ENCODE measurements at regions of chr17 and their contacts with region 1.

Region 1: GRCh38 chr17:36601303-36602029 is at the start of gene MRM1:
- DNase-seq: peak; percentile 93
- ATAC-seq: peak; percentile 90
- H3K4me3 Mint-ChIP-seq: peak within 1 kb of the TSS; percentile 88
- H3K27ac Mint-ChIP-seq: peak within 1 kb of the TSS; percentile 88
- H3K4me1 Mint-ChIP-seq: peaks cover 44% of the 10 kb centered on the region
- H3K27me3 Mint-ChIP-seq: no peaks in the 10 kb centered on the region
- total RNA-seq, gene MRM1: 10.7 to 13.1 TPM

Region 2: GRCh38 chr17:36545465-36546417 is 55.7 kb before region 1 on chr17:
- CTCF ChIA-PET with region 1: interaction called, 12 read pairs
- POLR2A ChIA-PET with region 1: interaction called, 16 read pairs
- DNase-seq: peak; percentile 96
- ATAC-seq: peak; percentile 83
- H3K4me3 Mint-ChIP-seq: peak overlapping the region; percentile 87
- H3K27ac Mint-ChIP-seq: peak overlapping the region; percentile 95
- H3K4me1 Mint-ChIP-seq: peaks cover 43% of the 10 kb centered on the region
- H3K27me3 Mint-ChIP-seq: no peaks in the 10 kb centered on the region

Region 3: GRCh38 chr17:36623281-36623680 is 21.8 kb after region 1 on chr17:
- CTCF ChIA-PET with region 1: interaction called, 40 read pairs
- POLR2A ChIA-PET with region 1: interaction called, 4 read pairs
- DNase-seq: no peak
- ATAC-seq: no peak
- H3K4me3 Mint-ChIP-seq: no peak overlapping the region
- H3K27ac Mint-ChIP-seq: no peak overlapping the region
- H3K4me1 Mint-ChIP-seq: peaks cover 2% of the 10 kb centered on the region
- H3K27me3 Mint-ChIP-seq: no peaks in the 10 kb centered on the region

Region 4: GRCh38 chr17:36705874-36706731 is 104.6 kb after region 1 on chr17:
- CTCF ChIA-PET with region 1: interaction called, 14 read pairs
- POLR2A ChIA-PET with region 1: no interaction called
- DNase-seq: peak; percentile 70
- ATAC-seq: peak; percentile 88
- H3K4me3 Mint-ChIP-seq: no peak overlapping the region
- H3K27ac Mint-ChIP-seq: no peak overlapping the region
- H3K4me1 Mint-ChIP-seq: no peaks in the 10 kb centered on the region
- H3K27me3 Mint-ChIP-seq: peaks cover 19% of the 10 kb centered on the region

Region 5: DNA sequence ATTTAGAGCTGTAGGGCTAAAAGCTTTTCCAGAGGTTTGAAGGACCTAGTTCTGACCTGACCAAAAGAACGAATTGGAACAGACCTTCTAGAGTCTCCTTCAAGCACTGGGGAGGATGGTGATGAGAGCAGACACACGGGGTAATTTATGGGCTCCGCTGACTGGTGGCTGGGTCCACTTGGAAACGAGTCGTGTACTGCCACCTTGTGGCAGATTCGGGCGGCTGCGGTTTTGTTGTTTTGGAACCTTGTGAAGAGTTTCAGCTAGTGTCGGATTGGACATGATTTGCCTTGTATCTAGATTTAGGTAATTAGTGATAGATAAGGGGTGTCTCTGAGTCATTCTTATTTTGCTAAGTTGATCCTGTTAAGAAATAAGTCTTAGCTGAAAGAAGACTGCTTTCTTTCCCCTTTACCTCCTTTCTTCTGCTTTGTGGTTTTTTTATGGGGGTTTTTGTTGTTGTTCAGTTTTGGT is 446.2 kb after region 1 on chr17:
- CTCF ChIA-PET with region 1: interaction called, 19 read pairs
- POLR2A ChIA-PET with region 1: no interaction called
- DNase-seq: peak; percentile 88
- ATAC-seq: peak; percentile 81
- H3K4me3 Mint-ChIP-seq: no peak overlapping the region
- H3K27ac Mint-ChIP-seq: no peak overlapping the region
- H3K4me1 Mint-ChIP-seq: peaks cover 12% of the 10 kb centered on the region
- H3K27me3 Mint-ChIP-seq: no peaks in the 10 kb centered on the region

Region 6: DNA sequence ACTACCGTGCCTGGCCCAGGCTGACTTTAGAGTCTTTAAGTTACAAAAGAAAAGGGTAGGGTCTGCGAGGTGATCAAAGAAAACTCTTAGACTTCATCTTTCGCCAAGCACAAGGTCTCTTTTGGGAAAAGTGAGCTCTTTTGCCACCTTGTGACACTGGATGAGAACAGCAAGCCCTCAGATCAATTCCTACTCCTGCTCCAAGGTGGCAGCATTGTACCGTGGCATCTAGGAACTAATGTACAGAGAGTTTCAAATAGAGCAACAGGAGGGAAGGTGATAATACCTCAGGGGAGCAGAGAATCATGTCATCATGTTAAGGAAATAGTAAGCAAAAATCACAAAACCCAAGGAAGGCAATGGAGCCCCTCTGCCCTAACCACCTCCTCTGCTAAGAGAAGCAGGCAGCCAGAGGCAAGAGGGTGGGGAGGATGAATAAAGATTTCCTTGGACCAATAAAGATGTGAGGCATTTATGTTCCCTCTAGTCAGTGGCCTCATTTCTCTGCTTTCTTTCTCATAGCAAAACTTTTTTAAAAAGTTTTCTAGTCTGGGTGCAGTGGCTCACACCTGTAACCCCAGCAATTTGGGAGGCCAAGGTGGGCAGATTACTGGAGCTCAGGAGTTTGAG is 772.2 kb after region 1 on chr17:
- CTCF ChIA-PET with region 1: interaction called, 24 read pairs
- POLR2A ChIA-PET with region 1: no interaction called
- DNase-seq: peak; percentile 84
- ATAC-seq: peak; percentile 96
- H3K4me3 Mint-ChIP-seq: no peak overlapping the region
- H3K27ac Mint-ChIP-seq: no peak overlapping the region
- H3K4me1 Mint-ChIP-seq: peaks cover 12% of the 10 kb centered on the region
- H3K27me3 Mint-ChIP-seq: no peaks in the 10 kb centered on the region